PC-9 (cell line): ENCODE measurements at regions of chr10 and their contacts with region 1.

Region 1: GRCh38 chr10:73798927-73799563 is 12.4 kb downstream of the NDST2 start:
- DNase-seq: peak in 1 of 2 experiments; percentile 16
- H3K4me3 ChIP-seq: no peak overlapping the region
- H3K27ac ChIP-seq: no peak overlapping the region
- H3K4me1 ChIP-seq: no peaks in the 10 kb centered on the region
- H3K27me3 ChIP-seq: no peaks in the 10 kb centered on the region
- CTCF ChIP-seq: no peak

Region 2: DNA sequence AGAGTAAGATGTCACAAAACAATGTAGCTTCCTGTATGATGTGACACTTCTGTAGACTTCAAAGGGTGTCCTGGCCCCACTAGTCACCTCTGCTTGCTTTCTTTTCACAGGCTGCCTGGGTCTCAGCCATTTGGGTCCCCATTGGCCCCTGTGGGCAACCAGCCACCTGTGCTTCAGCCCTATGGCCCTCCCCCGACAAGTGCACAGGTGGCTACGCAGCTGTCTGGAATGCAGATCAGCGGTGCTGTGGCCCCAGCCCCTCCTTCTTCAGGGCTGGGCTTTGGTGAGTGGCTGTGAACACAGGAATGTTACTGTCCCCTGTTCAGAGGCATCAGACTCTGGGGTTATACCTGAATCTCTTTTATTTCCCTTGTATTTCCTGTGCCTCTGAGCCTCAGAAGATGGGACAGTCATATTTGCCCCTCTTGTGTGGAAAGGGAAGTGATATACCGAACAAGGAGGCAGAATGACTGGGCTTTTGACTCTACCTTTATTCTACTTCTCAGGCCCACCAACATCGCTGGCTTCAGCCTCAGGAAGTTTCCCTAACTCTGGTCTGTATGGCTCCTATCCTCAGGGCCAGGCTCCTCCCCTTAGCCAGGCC is 39.4 kb before region 1 on chr10:
- CTCF ChIA-PET with region 1: no interaction called
- POLR2A ChIA-PET with region 1: no interaction called
- intact Hi-C with region 1: no loop called
- DNase-seq: peak in 1 of 2 experiments; percentile 51
- H3K4me3 ChIP-seq: no peak overlapping the region
- H3K27ac ChIP-seq: no peak overlapping the region
- H3K4me1 ChIP-seq: peaks cover 11% of the 10 kb centered on the region
- H3K27me3 ChIP-seq: no peaks in the 10 kb centered on the region
- CTCF ChIP-seq: no peak

Region 3: DNA sequence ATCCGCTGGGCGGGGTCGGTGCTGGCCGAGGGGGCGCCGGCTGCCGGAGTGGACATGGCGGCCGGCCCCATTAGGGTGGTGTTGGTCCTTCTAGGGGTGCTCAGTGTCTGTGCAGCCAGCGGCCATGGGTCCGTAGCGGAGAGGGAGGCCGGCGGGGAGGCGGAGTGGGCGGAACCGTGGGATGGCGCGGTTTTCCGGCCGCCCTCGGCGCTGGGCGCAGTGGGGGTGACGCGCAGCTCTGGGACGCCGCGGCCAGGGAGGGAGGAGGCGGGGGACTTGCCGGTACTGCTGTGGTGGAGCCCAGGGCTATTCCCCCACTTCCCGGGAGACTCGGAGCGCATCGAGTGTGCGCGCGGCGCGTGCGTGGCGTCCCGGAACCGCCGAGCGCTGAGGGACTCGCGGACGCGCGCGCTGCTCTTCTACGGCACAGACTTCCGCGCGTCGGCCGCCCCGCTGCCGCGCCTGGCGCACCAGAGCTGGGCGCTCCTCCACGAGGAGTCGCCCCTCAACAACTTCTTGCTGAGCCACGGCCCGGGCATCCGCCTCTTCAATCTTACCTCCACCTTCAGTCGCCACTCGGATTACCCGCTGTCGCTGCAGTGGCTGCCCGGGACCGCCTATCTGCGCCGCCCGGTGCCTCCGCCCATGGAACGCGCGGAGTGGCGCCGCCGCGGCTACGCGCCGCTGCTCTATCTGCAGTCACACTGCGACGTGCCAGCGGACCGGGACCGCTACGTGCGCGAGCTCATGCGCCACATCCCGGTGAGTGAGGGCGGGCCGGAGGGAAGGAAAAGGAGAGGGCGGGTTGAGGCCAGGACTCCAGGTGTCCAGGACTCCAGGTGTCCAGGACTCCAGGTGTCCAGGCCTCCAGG is 26.5 kb before region 1 on chr10:
- CTCF ChIA-PET with region 1: no interaction called
- POLR2A ChIA-PET with region 1: interaction called, 20 read pairs
- intact Hi-C with region 1: no loop called
- DNase-seq: peak in 1 of 2 experiments; percentile 68
- H3K4me3 ChIP-seq: peak overlapping the region; percentile 52; the same call in 1 of the 2 replicates
- H3K27ac ChIP-seq: 0 out of 2 replicates have a peak overlapping the region, but pooled peaks have one; percentile 22
- H3K4me1 ChIP-seq: peaks cover 7% of the 10 kb centered on the region
- H3K27me3 ChIP-seq: no peaks in the 10 kb centered on the region
- CTCF ChIP-seq: no peak

Region 4: DNA sequence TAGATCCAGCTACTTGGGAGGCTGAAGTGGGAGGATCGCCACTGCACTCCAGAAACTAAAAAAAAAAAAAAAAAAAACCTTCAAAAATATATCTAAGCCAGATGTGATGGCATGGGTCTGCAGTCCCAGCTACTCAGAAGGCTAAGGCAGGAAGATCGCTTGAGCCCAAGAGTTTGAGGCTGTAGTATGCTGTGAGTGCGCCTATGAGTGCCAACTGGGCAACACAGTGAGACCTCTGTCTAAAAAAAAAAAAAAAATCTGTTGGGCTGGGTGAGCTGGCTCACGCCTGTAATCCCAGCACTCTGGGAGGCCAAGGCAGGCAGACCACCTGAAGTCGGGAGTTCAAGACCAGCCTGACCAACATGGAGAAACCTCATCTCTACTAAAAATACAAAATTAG is 20.0 kb before region 1 on chr10:
- CTCF ChIA-PET with region 1: interaction called, 33 read pairs
- POLR2A ChIA-PET with region 1: interaction called, 20 read pairs
- intact Hi-C with region 1: no loop called
- DNase-seq: no peak
- H3K4me3 ChIP-seq: no peak overlapping the region
- H3K27ac ChIP-seq: no peak overlapping the region
- H3K4me1 ChIP-seq: peaks cover 27% of the 10 kb centered on the region
- H3K27me3 ChIP-seq: no peaks in the 10 kb centered on the region
- CTCF ChIP-seq: no peak

Region 5: DNA sequence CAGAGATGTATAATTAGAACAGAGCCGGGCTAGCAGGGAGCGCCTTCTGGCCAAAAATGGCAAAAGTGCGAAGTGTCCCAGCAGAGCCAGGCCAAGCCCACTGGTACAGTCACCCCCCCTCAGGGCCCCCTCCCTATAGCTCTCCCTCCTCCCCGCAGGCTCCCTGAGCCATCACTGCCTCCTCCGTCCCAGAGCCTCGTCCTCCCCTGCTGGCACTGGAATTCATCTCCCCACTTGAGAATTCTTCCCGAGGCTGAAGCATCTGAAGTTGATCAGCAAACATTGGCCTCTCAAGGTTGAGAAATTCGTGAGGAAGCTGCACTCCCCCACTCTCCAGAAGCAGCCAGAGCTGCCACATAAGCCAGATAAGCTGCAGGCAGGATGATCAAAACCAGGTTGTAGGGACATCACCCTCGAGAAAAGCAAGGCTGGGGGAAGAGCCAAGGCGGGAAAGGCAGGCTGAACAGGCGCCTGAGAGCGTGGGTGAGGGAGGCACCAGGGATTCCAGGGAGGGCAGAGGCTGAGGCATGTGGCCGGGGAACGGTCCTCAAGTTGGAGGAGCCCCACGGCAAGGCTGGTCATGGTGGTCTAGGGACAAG is 51.9 kb after region 1 on chr10:
- CTCF ChIA-PET with region 1: no interaction called
- POLR2A ChIA-PET with region 1: no interaction called
- intact Hi-C with region 1: no loop called
- DNase-seq: no peak
- H3K4me3 ChIP-seq: no peak overlapping the region
- H3K27ac ChIP-seq: peak overlapping the region; percentile 15; the same call in 1 of the 2 replicates
- H3K4me1 ChIP-seq: no peaks in the 10 kb centered on the region
- H3K27me3 ChIP-seq: no peaks in the 10 kb centered on the region
- CTCF ChIP-seq: no peak

Region 6: DNA sequence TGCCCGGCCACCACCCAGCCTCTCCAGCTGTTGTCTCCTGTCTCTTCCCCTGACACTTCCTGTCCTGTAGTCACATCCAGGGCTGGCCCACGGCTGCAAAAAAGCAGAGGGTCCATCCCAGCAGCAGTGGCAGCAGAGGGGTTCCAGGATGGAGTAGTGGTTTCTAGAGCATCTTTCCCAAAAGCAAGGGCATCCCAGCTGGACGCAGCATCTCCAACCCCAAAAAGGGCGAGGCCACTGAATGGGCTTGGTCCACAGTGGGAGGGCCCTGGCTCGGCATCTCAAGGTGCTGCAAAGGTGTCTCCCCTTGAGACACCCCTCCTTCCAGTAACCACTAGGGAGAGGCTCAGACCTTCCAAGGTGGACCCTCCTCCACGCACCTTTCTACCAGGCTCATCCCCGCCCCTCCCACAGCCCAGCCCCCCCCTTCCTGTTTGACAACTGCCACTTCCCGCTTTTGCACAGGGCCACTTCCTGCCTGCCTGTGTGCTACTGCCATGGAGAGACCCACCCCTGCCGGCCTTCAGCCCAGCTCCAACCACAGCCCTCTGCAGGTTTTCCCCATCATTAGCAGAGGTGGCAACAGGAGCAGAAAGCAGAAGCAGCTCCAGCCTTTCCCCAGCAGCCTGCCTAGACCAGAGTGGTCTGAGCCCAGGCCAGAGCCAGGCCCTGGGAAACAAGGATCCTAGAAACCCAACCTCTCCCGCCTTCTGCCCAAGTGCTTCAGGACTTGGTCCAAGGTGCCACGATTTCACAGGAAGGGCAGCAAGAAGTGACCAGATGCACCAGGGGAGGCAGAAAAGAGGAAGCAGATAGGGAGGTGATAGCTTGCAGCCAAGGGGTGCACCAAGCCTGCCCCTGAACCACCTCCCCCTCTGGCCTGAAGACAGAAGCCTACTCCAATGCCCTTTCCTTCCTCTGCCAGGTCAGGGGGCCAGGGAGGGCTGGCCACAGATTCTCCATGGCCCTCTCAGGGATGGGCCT is 66.7 kb after region 1 on chr10:
- CTCF ChIA-PET with region 1: no interaction called
- POLR2A ChIA-PET with region 1: no interaction called
- intact Hi-C with region 1: no loop called
- DNase-seq: no peak
- H3K4me3 ChIP-seq: no peak overlapping the region
- H3K27ac ChIP-seq: no peak overlapping the region
- H3K4me1 ChIP-seq: peaks cover 29% of the 10 kb centered on the region
- H3K27me3 ChIP-seq: no peaks in the 10 kb centered on the region
- CTCF ChIP-seq: no peak